Panc1 (cell line): ENCODE measurements at regions of chrX and their contacts with region 1.

Region 1: GRCh38 chrX:136896121-136896914 is 15.8 kb upstream of the RBMX start:
- DNase-seq: no peak
- ATAC-seq: no peak
- H3K4me3 ChIP-seq: no peak overlapping the region
- H3K27ac ChIP-seq: no peak overlapping the region
- H3K4me1 ChIP-seq: no peaks in the 10 kb centered on the region; the same call in 1 of the 2 replicates
- H3K27me3 ChIP-seq: no peaks in the 10 kb centered on the region
- CTCF ChIP-seq: no peak

Region 2: DNA sequence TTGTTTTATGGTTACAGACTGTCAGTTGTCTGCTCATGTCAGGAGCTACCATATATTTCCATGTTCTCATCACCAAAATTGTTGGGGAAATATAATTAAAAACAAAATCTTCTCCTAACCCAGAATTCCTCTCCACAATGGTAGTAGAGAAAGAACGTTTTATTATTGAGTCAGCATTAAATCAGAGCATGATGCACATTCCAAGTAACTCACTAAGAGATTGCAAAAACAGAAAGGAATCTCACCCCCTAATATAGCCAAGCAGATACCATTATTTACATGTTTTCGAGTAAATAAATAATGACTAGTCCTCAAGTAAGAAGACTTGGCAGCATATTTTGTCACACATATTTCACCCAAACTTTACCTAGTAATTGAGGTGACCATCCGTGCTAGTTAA is 79.3 kb before region 1 on chrX:
- CTCF ChIA-PET with region 1: no interaction called
- POLR2A ChIA-PET with region 1: no interaction called
- in situ Hi-C with region 1: no loop called
- intact Hi-C with region 1: no loop called
- DNase-seq: peak; percentile 17
- ATAC-seq: peak; percentile 45; the same call in 1 of the 2 replicates
- H3K4me3 ChIP-seq: no peak overlapping the region
- H3K27ac ChIP-seq: no peak overlapping the region; the same call in 1 of the 2 replicates
- H3K4me1 ChIP-seq: no peaks in the 10 kb centered on the region
- H3K27me3 ChIP-seq: no peaks in the 10 kb centered on the region
- CTCF ChIP-seq: no peak

Region 3: GRCh38 chrX:136856551-136856950 is 39.8 kb before region 1 on chrX:
- CTCF ChIA-PET with region 1: no interaction called
- POLR2A ChIA-PET with region 1: interaction called, 12 read pairs
- in situ Hi-C with region 1: no loop called
- intact Hi-C with region 1: no loop called
- DNase-seq: no peak
- ATAC-seq: no peak
- H3K4me3 ChIP-seq: no peak overlapping the region
- H3K27ac ChIP-seq: no peak overlapping the region
- H3K4me1 ChIP-seq: no peaks in the 10 kb centered on the region
- H3K27me3 ChIP-seq: no peaks in the 10 kb centered on the region
- CTCF ChIP-seq: no peak